Activated T-helper 1 cell treated with anti-CD3 and anti-CD28 coated beads, Interleukin-12 subunit alpha, Interleukin-12 subunit beta, Interleukin-2, Interleukin-4 antibody, amounts not matched to agents 30 ng/mL and 10 ng/mL and 1 ng/mL, durations not matched to agents 14 hours and 24 hours and 36 hours (primary cell): ENCODE measurements at regions of chr20 and their contacts with region 1.

Region 1: GRCh38 chr20:41443691-41444090 is 77.1 kb upstream of the EMILIN3 start:
- DNase-seq: no peak
- H3K4me3 Mint-ChIP-seq: peak overlapping the region; percentile 1
- H3K27ac Mint-ChIP-seq: peak overlapping the region; percentile 84
- H3K4me1 Mint-ChIP-seq: peaks cover 38% of the 10 kb centered on the region
- H3K27me3 Mint-ChIP-seq: peaks cover 2% of the 10 kb centered on the region

Region 2: GRCh38 chr20:41428285-41428684 is 15.4 kb before region 1 on chr20:
- intact Hi-C with region 1: loop called (anchors 1 kb)
- DNase-seq: peak; percentile 32
- H3K4me3 Mint-ChIP-seq: peak overlapping the region; percentile 69
- H3K27ac Mint-ChIP-seq: peak overlapping the region; percentile 94
- H3K4me1 Mint-ChIP-seq: peaks cover 46% of the 10 kb centered on the region
- H3K27me3 Mint-ChIP-seq: no peaks in the 10 kb centered on the region